ENCODE measurements at regions of chr6 and their contacts with region 1.

Region 1: GRCh38 chr6:129774697-129775447 is 64.9 kb upstream of the ARHGAP18 start:
- DNase-seq: peak; percentile 54 to 85
- H3K4me3 ChIP-seq: peak overlapping the region in 3 of 4 experiments; percentile 22 to 43 (median 34); a peak in 4 of 8 replicates
- H3K27ac ChIP-seq: no peak overlapping the region
- H3K4me1 ChIP-seq: peaks cover 0 to 4% (median 2%) of the 10 kb centered on the region in 4 experiments; a peak in 3 of 7 replicates
- H3K27me3 ChIP-seq: no peaks in the 10 kb centered on the region
- CTCF ChIP-seq: peak; percentile 86 to 99 (median 95)
- EP300 ChIP-seq: no peak
- POLR2A ChIP-seq: no peak
- RAD21 ChIP-seq: peak; percentile 81 to 89

Region 2: DNA sequence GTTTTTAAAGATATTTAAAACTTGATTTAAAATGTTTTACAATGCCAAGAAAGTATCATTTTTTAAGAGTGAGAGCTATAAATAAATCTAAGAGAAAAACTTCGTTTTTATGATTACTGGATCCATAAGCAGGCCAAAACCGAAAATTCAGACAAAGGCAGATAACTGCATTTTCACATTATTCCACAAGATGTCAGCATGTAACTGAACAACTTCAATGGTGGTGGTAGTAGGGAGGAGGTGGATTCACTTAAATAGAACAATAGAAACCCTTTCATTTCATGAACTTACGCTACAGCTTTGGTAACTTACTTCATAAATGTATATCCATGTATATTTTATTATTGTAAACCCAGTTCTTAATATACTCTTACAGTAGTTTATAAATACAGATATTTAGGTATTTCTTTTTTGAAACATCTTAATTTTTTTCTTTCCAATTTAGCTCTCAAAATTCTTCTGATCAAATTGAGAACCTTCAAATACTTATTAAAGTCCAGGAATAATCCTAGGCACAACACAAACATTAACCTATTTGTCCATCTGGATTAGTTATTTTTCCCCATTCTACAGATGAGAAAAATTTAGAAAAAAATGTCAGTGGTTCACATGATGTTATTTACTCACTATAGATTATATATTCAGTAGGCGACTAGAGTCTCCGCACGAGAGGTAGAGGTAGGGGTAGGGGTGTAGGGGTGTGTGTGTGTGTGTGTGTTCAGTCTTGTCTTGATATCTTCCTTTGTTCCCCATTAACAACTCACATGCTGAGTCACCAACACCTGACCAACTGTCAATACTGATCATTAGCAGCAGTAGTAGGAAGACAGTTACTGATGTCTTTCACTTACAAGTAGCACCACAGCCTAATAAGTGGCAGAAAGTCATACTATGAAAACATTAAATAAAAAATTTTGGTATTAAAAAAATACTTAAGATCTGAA is 176.4 kb before region 1 on chr6:
- CTCF ChIA-PET with region 1: interaction called, 56 read pairs
- POLR2A ChIA-PET with region 1: no interaction called
- DNase-seq: no peak
- H3K4me3 ChIP-seq: no peak overlapping the region
- H3K27ac ChIP-seq: no peak overlapping the region
- H3K4me1 ChIP-seq: peaks cover 0 to 3% (median 0%) of the 10 kb centered on the region in 4 experiments; a peak in 1 of 7 replicates
- H3K27me3 ChIP-seq: no peaks in the 10 kb centered on the region
- CTCF ChIP-seq: peak in 2 of 3 experiments; percentile 68 to 72; a peak in 3 of 4 replicates
- EP300 ChIP-seq: no peak
- POLR2A ChIP-seq: no peak
- RAD21 ChIP-seq: peak; percentile 95 to 96

Region 3: DNA sequence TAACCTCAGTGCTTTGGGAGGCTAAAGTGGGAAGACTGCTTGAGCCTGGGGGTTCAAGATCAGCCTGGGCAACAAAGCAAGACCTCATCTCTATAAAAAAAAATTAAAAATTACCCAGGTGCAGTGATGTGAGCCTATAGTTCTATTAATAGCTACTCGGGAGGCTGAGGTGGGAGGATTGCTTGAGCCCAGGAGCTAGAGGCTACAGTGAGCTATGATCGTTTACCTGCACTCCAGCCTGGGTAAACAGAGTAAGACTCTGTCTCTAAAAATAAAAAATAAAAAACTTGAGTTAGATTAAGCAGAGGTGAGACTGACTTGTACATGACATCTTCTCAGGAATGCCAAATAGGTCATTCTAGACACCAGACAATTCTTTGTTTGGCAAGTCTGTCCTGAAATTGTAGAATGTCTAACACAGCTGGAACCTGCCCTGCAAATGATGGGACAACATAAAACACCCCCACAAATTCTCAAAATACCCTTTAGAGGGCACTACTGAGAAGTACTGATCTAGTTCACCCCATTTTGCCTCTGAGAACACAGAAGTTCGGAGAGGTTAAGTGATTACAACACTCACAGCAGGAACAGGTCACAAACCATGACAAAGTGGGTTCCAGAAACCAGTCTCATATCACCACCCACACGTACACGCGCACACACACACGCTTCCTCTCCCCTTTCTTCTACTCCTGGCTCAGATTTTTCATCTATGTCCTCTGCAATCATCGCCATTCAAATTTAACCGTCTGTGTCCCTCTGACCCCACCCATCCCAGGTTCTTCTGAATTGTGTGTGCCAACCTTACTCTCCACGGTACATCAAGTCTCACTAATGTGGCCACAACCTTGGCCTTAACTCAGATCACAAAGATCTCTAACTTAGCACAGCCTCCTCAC is 103.2 kb before region 1 on chr6:
- CTCF ChIA-PET with region 1: interaction called, 10 read pairs
- POLR2A ChIA-PET with region 1: no interaction called
- DNase-seq: no peak
- H3K4me3 ChIP-seq: no peak overlapping the region
- H3K27ac ChIP-seq: no peak overlapping the region
- H3K4me1 ChIP-seq: 0 out of 7 replicates have a peak, but pooled peaks cover 0 to 2% (median 0%) of the 10 kb centered on the region in 4 experiments
- H3K27me3 ChIP-seq: no peaks in the 10 kb centered on the region
- CTCF ChIP-seq: peak in 2 of 3 experiments; percentile 53 to 58; a peak in 3 of 4 replicates
- EP300 ChIP-seq: no peak
- POLR2A ChIP-seq: no peak
- RAD21 ChIP-seq: peak; percentile 21 to 53; a peak in 3 of 4 replicates

Region 4: DNA sequence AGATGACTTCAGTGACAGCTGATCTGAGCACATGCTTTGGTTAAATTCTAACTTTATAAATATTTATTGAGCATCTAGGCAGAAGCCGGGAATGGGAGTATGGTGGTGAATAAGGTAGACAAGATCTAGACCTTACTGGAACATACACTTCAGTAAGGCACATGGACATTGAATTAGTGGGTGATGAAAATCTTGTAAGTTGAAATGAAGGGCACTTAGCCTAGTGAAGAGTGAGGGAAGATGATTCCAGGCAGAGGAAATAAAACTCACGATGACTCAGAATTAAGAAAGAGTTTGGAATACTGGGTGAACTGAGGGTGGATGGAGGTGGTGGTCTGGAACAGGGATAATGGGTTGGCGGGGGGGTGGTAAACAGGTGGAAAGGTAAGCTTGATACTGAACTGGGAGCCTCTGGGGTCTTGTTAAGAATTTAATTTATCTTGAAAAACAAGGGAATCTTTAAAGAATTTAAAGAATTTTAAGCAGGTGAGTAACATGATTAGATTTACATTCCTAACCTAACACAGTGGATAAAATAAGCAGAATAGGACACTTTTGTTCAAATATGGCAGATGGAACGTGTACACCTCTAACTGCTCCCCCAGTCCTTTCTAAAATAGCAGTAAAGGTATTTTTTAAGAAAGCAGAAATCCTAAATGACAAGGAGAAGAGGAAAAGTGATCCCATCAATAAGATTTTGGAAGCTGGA is 10.3 kb after region 1 on chr6:
- CTCF ChIA-PET with region 1: interaction called, 71 read pairs
- POLR2A ChIA-PET with region 1: no interaction called
- DNase-seq: no peak
- H3K4me3 ChIP-seq: no peak overlapping the region
- H3K27ac ChIP-seq: no peak overlapping the region
- H3K4me1 ChIP-seq: no peaks in the 10 kb centered on the region
- H3K27me3 ChIP-seq: no peaks in the 10 kb centered on the region
- CTCF ChIP-seq: no peak
- EP300 ChIP-seq: no peak
- POLR2A ChIP-seq: no peak
- RAD21 ChIP-seq: no peak

Region 5: DNA sequence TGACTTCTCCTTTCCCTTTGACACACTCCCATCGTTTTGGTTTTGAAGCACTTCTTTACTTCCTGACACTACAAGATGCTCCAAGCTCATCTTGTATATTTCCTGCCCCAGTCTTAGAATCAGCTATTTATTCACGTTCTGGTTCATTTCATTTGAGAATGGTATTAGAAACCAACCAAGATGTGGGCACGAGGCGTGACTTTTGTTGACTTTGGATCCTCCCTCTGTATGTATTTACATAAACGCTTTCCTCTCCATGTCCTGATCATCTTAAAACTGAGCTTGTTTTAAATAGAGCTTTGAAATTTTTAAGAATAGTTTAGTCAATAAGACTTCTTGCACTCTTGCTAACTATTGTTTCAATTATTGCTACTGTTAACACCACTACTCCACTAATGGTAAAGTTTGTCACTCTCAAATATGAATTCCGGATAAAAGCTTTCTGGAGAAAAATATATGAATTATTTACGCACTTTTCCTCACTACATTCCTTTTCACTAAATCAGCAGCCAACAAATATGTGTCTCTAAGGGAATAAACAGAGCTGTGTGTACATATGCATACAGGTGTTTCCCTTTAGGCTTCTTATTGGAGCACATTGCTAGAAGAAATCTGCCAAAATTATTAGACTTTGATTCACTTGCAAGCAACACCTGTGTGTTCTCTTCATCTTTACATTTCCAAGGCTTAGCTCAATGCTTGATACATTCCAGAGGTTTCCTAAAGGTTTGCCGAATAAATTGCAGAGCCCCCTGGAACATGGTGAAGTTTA is 163.6 kb after region 1 on chr6:
- CTCF ChIA-PET with region 1: interaction called, 11 read pairs
- POLR2A ChIA-PET with region 1: no interaction called
- DNase-seq: no peak
- H3K4me3 ChIP-seq: no peak overlapping the region
- H3K27ac ChIP-seq: no peak overlapping the region
- H3K4me1 ChIP-seq: no peaks in the 10 kb centered on the region
- H3K27me3 ChIP-seq: no peaks in the 10 kb centered on the region
- CTCF ChIP-seq: no peak
- EP300 ChIP-seq: no peak
- POLR2A ChIP-seq: no peak
- RAD21 ChIP-seq: no peak

Region 6: DNA sequence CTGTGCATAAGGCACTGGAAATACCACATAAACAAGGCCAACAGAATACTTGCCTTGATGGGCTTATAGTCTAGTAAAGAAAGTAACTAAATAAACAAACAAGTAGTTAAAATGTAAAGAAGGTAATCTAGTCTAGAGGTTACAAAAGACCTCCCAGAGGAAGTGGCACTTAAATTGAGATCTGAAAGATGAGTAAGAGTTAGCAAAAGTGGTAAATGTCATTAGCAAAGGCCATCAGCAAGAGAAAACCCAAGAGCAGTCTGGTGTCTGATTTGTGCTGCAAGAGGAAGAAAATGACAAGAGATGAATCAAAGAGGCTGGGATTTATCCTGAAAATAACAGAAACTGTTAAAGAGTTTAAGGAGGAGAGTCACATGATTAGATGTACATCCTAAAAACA is 955.7 kb after region 1 on chr6:
- CTCF ChIA-PET with region 1: no interaction called
- POLR2A ChIA-PET with region 1: no interaction called
- DNase-seq: no peak
- H3K4me3 ChIP-seq: no peak overlapping the region
- H3K27ac ChIP-seq: no peak overlapping the region
- H3K4me1 ChIP-seq: no peaks in the 10 kb centered on the region
- H3K27me3 ChIP-seq: no peaks in the 10 kb centered on the region
- CTCF ChIP-seq: no peak
- EP300 ChIP-seq: no peak
- POLR2A ChIP-seq: no peak
- RAD21 ChIP-seq: no peak

Region 7: DNA sequence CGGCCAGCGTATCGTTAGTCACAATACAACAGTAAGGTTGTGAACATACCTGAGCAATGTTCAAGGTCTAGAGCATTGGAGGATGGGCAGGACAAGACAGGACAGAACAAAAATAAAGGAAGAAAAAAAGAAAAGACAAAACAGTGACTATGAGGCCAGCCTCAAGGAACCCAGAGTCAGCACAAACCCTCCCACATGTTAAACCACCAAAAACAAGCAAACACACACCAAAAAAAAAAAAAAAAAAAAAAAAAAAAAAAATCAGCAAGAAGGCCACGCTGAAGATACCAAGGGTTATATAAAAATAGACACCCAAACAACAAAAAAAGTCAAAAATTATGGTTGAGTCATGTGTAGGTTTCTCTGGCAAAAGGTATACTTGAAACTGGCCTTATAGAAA is 1840.4 kb after region 1 on chr6:
- CTCF ChIA-PET with region 1: no interaction called
- POLR2A ChIA-PET with region 1: no interaction called
- DNase-seq: no peak
- H3K4me3 ChIP-seq: no peak overlapping the region
- H3K27ac ChIP-seq: no peak overlapping the region
- H3K4me1 ChIP-seq: no peaks in the 10 kb centered on the region
- H3K27me3 ChIP-seq: no peaks in the 10 kb centered on the region
- CTCF ChIP-seq: no peak
- EP300 ChIP-seq: no peak
- POLR2A ChIP-seq: no peak
- RAD21 ChIP-seq: no peak

Measured in H1 (cell line).